Vagina (tissue), 2 donors: ENCODE measurements at regions of chr6 and their contacts with region 1.

Region 1: GRCh38 chr6:30922447-30922852 is 8.4 kb downstream of the VARS2 start:
- DNase-seq: no peak
- H3K4me3 ChIP-seq: no peak overlapping the region
- H3K27ac ChIP-seq: no peak overlapping the region
- H3K4me1 ChIP-seq: no peaks in the 10 kb centered on the region
- H3K27me3 ChIP-seq: no peaks in the 10 kb centered on the region
- CTCF ChIP-seq: no peak
- POLR2A ChIP-seq: no peak

Region 2: DNA sequence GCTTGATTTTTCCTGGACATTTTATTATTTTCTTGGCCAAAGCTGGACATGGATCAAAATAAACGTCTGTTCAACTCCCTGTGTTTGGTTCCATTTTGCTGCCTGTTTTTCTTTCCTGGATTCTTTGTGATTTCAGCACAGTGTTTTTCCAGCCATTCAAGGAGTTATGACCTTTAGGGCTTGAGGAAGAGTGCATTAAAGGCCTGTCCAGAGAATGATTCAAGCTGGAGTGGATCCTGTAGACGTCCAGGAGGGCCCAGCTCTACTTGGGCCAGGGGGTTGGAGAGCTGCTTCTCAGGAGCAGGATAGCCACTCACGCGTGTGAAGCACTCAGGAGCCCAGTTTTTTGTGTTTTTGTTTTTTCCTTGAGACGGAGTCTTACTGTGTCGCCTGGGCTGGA is 121.6 kb before region 1 on chr6:
- intact Hi-C with region 1: no loop called
- DNase-seq: no peak
- H3K4me3 ChIP-seq: no peak overlapping the region
- H3K27ac ChIP-seq: peak overlapping the region; percentile 62
- H3K4me1 ChIP-seq: peaks cover 13% of the 10 kb centered on the region
- H3K27me3 ChIP-seq: no peaks in the 10 kb centered on the region
- CTCF ChIP-seq: no peak
- POLR2A ChIP-seq: no peak

Region 3: DNA sequence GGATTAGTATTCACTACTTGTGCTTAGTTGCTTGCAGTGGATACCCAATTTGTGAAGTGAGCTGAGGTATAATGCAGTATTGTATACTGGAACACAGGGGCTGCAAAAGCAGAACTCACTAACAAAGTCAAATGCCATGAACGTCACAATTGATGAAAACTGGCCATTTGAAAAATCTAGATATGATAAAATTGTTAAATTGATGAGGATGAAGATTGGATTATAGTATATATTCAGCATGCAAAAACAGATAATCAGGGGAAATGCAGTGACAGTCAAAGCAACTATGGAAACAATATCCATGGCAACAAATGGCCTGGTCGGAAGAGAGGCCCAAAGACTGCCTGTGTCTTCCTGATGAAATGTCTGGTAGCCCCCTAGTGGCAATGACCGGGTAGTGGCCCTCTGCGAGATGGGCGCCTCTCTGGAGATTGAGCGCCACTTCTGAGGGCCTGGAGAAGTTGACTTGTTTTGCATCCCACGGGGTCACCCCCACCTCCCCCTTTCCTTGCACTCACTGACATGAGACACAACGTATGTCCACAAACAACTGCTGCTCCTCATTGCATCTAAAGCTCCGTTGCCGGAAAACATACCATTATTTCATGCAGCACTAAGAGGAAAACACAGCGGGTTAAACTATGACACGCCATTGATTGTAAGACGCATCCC is 146.4 kb after region 1 on chr6:
- intact Hi-C with region 1: loop called (anchors 5 kb)
- DNase-seq: no peak
- H3K4me3 ChIP-seq: no peak overlapping the region
- H3K27ac ChIP-seq: no peak overlapping the region
- H3K4me1 ChIP-seq: peaks cover 10% of the 10 kb centered on the region
- H3K27me3 ChIP-seq: no peaks in the 10 kb centered on the region
- CTCF ChIP-seq: peak; percentile 38 to 72 (median 53)
- POLR2A ChIP-seq: no peak